Panc1 (cell line): ENCODE measurements at regions of chr14 and their contacts with region 1.

Region 1: DNA sequence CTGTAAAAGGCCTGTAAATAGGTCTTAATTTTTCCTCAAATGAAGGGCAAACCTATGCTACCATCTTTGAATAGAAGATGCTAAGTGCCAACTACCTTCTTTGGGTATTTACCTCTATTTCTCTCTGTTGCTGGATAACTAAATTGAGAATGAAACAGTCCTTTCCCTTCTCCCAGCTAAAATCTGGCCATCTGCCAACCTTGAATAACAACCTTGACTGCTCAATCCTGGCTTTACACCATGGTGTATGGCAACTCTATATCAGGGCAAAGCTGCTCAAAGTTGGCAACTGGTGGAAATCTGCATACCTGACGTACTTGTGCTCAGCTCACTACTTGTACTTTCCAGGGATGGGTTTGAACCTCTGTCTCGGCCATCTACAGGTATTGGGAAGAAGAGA is 22.5 kb downstream of the ZFYVE26 start:
- DNase-seq: no peak
- ATAC-seq: no peak
- H3K4me3 ChIP-seq: no peak overlapping the region
- H3K27ac ChIP-seq: no peak overlapping the region
- H3K4me1 ChIP-seq: no peaks in the 10 kb centered on the region
- H3K27me3 ChIP-seq: no peaks in the 10 kb centered on the region
- CTCF ChIP-seq: no peak

Region 2: DNA sequence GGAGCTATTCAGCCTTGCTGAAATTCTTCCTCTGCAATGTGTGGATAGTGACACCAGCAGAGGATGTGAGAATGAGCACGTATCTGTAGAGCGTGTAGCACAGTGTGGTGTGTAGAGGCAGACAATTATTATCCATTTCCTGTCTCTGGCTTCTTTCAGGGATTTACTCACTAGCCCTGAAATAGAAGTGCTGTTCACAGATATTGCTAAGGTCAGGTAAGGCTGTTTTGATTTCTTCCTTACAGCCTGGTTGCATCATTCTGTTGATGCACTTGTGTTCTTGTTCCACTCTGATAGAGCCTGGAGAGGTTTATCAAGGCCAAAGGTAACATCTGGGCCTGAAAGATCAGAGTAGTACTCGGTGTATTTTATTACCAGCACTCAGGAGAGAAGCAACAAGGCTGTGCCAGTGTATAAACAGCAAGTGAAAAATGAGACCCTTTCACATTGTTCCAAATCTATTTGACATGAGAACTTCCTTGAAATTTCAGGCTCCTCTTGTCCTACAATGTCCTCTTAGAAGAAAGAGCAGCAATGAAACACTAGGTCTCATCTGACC is 157.4 kb before region 1 on chr14:
- CTCF ChIA-PET with region 1: no interaction called
- POLR2A ChIA-PET with region 1: interaction called, 18 read pairs
- in situ Hi-C with region 1: no loop called
- intact Hi-C with region 1: no loop called
- DNase-seq: no peak
- ATAC-seq: no peak
- H3K4me3 ChIP-seq: no peak overlapping the region
- H3K27ac ChIP-seq: no peak overlapping the region
- H3K4me1 ChIP-seq: no peaks in the 10 kb centered on the region; the same call in 1 of the 2 replicates
- H3K27me3 ChIP-seq: no peaks in the 10 kb centered on the region
- CTCF ChIP-seq: no peak